ENCODE measurements at regions of chr6 and their contacts with region 1.

Region 1: DNA sequence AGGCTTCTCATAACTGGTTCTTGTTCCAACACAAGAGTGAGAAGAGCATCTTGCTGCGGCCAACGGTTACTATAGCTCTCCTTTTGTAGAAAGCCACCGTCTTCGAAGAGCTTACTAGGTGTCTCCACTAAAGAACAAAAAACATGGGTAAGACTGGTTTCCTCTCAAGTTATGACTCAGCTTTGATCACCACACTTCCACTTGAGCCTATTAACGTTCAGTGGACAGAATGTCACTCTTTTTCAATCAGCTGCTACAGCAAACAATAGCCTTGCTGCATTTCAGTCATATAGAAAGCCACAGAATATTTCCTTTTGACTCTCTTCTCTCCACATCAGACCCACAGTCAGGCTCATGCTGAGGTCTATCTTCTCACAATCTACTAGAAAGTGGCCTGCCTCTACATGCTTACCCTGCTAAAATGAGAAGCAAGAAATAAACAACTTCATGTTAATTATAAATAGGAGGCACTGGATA is 243.5 kb upstream of the PREP start:
- DNase-seq: peak; percentile 76
- ATAC-seq: peak; percentile 84
- H3K4me3 Mint-ChIP-seq: no peak overlapping the region
- H3K27ac Mint-ChIP-seq: peak overlapping the region; percentile 89
- H3K4me1 Mint-ChIP-seq: peaks cover 67% of the 10 kb centered on the region
- H3K27me3 Mint-ChIP-seq: peaks cover 3% of the 10 kb centered on the region
- CTCF ChIP-seq: no peak

Region 2: GRCh38 chr6:105484238-105485161 is 161.9 kb before region 1 on chr6:
- CTCF ChIA-PET with region 1: no interaction called
- POLR2A ChIA-PET with region 1: interaction called, 4 read pairs
- intact Hi-C with region 1: loop called (anchors 10 kb)
- DNase-seq: peak; percentile 12
- ATAC-seq: peak; percentile 80
- H3K4me3 Mint-ChIP-seq: peak overlapping the region; percentile 22
- H3K27ac Mint-ChIP-seq: peak overlapping the region; percentile 74
- H3K4me1 Mint-ChIP-seq: peaks cover 21% of the 10 kb centered on the region
- H3K27me3 Mint-ChIP-seq: peaks cover 8% of the 10 kb centered on the region
- CTCF ChIP-seq: peak; percentile 62